ENCODE measurements at regions of chr1 and their contacts with region 1.

Region 1: GRCh38 chr1:81731989-81732388 is 68.7 kb upstream of the ADGRL2 start:
- DNase-seq: peak; percentile 52
- H3K4me3 ChIP-seq: no peak overlapping the region
- H3K27ac ChIP-seq: no peak overlapping the region
- H3K4me1 ChIP-seq: peaks cover 14% of the 10 kb centered on the region
- H3K27me3 ChIP-seq: no peaks in the 10 kb centered on the region
- CTCF ChIP-seq: peak; percentile 42 to 63

Region 2: DNA sequence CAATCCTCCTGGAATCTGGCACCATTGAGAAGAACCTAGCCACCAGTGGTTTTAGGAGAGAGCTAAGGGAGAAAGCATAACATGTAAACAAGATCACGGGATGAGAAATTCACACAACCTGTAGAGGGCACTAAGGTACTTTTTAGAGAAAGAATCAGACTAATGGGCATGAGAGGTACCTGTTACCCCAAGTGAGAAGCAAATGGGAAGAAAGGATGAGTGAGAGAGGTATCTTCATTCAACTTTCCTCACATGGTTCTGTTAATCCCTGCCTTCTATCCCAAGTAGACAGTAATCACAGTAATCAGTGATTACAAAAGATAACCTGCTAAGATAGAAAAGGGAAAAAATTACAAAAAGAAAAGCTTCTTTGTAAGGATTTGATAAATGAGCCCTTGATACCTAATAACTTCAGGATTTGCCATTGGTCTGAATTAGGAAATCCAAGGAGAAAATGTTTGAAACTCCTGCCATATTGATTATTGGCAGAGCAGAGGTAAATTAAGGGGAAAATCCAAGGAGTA is 182.3 kb before region 1 on chr1:
- CTCF ChIA-PET with region 1: interaction called, 3 read pairs
- dilution Hi-C with region 1: no loop called
- in situ Hi-C with region 1: loop called in 1 of 2 experiments (anchors 25 kb)
- intact Hi-C with region 1: loop called (anchors 2 kb)
- DNase-seq: peak; percentile 40
- H3K4me3 ChIP-seq: no peak overlapping the region
- H3K27ac ChIP-seq: no peak overlapping the region
- H3K4me1 ChIP-seq: peaks cover 8% of the 10 kb centered on the region
- H3K27me3 ChIP-seq: no peaks in the 10 kb centered on the region
- CTCF ChIP-seq: peak; percentile 50 to 68

Region 3: GRCh38 chr1:81650776-81651175 is 81.2 kb before region 1 on chr1:
- CTCF ChIA-PET with region 1: no interaction called
- dilution Hi-C with region 1: no loop called
- in situ Hi-C with region 1: no loop called
- intact Hi-C with region 1: no loop called
- DNase-seq: no peak
- H3K4me3 ChIP-seq: no peak overlapping the region
- H3K27ac ChIP-seq: no peak overlapping the region
- H3K4me1 ChIP-seq: no peaks in the 10 kb centered on the region
- H3K27me3 ChIP-seq: no peaks in the 10 kb centered on the region
- CTCF ChIP-seq: no peak

Region 4: DNA sequence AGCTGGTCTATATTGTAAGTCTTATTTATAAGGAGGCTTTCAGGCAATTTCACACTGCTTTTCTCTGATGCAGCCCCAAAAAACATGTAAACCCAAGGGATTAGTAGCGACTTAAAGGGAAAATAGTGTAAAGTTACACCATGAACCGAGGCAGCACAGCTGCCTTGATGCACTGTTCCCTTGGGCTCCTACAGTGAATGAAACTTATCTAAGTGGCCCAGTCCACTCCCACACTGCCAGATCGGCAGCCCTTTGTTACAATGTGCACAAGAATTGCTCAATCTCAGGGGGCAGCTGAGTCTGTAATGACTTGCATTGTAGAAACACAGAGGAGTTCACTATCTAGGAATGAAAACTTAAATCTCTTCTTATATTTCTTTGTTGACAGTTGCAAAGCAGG is 52.0 kb before region 1 on chr1:
- CTCF ChIA-PET with region 1: no interaction called
- dilution Hi-C with region 1: no loop called
- in situ Hi-C with region 1: no loop called
- intact Hi-C with region 1: no loop called
- DNase-seq: no peak
- H3K4me3 ChIP-seq: no peak overlapping the region
- H3K27ac ChIP-seq: no peak overlapping the region
- H3K4me1 ChIP-seq: peaks cover 9% of the 10 kb centered on the region
- H3K27me3 ChIP-seq: no peaks in the 10 kb centered on the region
- CTCF ChIP-seq: no peak

Region 5: DNA sequence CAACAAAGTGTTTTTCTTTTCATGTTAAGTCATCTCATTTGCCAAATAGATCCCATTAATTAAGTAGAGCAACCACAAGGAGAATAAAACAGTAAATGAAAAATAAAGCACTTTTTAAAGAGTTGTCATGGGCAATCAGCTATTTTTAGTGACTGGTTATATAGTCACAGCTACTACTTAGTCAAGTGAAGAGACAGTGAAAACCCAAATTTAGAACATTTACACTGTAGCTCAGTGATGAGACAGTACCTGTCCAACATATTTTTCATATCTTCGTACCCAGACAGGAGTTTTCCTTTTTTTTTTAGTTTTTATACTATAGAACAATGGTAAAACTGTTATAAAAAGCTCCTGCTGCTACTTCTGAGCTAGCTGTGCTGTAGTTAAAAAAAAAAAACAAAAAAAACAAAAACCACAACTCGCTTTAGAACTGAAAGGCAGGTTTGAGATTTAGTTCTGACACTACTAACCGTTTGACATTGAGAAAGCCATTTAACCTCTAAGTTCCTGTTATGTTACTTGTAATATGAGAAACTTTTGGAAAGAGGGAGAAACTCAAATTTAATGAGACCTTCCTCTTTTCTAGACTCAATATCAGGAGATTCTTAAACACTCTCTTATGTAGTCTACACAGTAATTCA is 846.2 kb after region 1 on chr1:
- CTCF ChIA-PET with region 1: no interaction called
- dilution Hi-C with region 1: no loop called
- in situ Hi-C with region 1: no loop called
- intact Hi-C with region 1: loop called (anchors 5 kb)
- DNase-seq: no peak
- H3K4me3 ChIP-seq: no peak overlapping the region
- H3K27ac ChIP-seq: no peak overlapping the region
- H3K4me1 ChIP-seq: no peaks in the 10 kb centered on the region
- H3K27me3 ChIP-seq: no peaks in the 10 kb centered on the region
- CTCF ChIP-seq: no peak